ENCODE measurements at regions of chr5 and their contacts with region 1.

Region 1: GRCh38 chr5:95846554-95847260 is 24.2 kb upstream of the GLRX start:
- DNase-seq: peak in 1 of 2 donors; percentile 68
- ATAC-seq: peak; percentile 43 to 56
- H3K4me3 ChIP-seq: peak overlapping the region in 3 of 4 donors; percentile 8 to 59 (median 52)
- H3K27ac ChIP-seq: peak overlapping the region; percentile 84 to 92 (median 88)
- H3K4me1 ChIP-seq: peaks cover 19 to 30% of the 10 kb centered on the region in 2 donors
- H3K27me3 ChIP-seq: no peaks in the 10 kb centered on the region
- CTCF ChIP-seq: peak; percentile 92 to 97 (median 94)
- POLR2A ChIP-seq: no peak

Region 2: DNA sequence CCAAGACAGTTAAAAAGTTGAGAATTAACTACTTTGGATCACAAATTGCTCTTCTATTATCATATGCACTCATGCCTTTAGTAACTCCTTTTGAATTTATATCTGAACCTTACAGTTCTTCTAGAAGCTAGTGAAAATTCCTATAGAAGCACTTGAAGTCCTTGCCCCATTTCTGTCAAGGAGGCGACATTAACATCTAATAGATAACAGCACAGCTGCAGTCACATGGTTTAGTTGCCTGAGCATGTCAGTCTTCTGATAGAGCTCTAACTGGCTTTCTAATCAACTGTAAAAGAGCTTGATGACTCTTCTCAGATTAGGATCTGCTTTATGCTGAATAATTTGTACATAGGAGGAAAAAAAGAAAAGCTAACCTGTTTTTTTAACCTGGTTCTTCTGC is 191.1 kb before region 1 on chr5:
- in situ Hi-C with region 1: loop called in 2 of 4 experiments (anchors 5 kb)
- intact Hi-C with region 1: no loop called
- DNase-seq: no peak
- ATAC-seq: no peak
- H3K4me3 ChIP-seq: no peak overlapping the region
- H3K27ac ChIP-seq: no peak overlapping the region
- H3K4me1 ChIP-seq: peaks cover 0 to 1% of the 10 kb centered on the region in 2 donors
- H3K27me3 ChIP-seq: no peaks in the 10 kb centered on the region
- CTCF ChIP-seq: no peak
- POLR2A ChIP-seq: no peak

Region 3: GRCh38 chr5:95669540-95669939 is 177.2 kb before region 1 on chr5:
- in situ Hi-C with region 1: loop called in 3 of 4 experiments (anchors 5 kb)
- intact Hi-C with region 1: loop called (anchors 2 kb)
- DNase-seq: peak; percentile 86 to 89
- ATAC-seq: peak; percentile 99
- H3K4me3 ChIP-seq: no peak overlapping the region
- H3K27ac ChIP-seq: peak overlapping the region; percentile 68 to 86 (median 82)
- H3K4me1 ChIP-seq: peaks cover 14% of the 10 kb centered on the region in 2 donors
- H3K27me3 ChIP-seq: no peaks in the 10 kb centered on the region
- CTCF ChIP-seq: no peak
- POLR2A ChIP-seq: peak in 1 of 2 donors; percentile 50

Region 4: GRCh38 chr5:95773335-95774059 is 73.2 kb before region 1 on chr5:
- in situ Hi-C with region 1: loop called in 2 of 4 experiments (anchors 5 to 10 kb)
- intact Hi-C with region 1: no loop called
- DNase-seq: no peak
- ATAC-seq: no peak
- H3K4me3 ChIP-seq: no peak overlapping the region
- H3K27ac ChIP-seq: peak overlapping the region in 3 of 4 donors; percentile 2 to 33 (median 4)
- H3K4me1 ChIP-seq: peaks cover 9 to 41% of the 10 kb centered on the region in 2 donors
- H3K27me3 ChIP-seq: no peaks in the 10 kb centered on the region
- CTCF ChIP-seq: no peak
- POLR2A ChIP-seq: no peak

Region 5: DNA sequence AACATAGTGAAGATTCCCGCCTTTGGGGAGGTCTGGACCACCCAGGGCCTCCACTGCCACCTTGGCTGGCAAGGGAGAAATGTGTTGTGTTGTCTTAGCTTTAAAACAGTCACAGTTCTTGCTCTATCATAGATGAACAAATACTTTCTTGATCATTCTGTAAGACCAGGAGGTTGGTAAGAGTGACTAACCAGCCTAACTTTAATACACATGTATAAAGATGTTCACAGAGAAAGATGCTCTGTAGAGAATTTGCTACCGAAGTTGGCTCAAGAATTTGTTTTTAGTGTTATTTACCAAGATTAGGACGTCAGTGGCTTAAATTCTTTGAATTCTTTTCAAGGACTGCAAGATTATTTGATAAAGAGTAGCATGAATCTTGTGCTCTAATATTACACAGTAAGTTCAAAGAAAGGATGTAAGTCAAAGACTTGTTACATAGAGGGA is 52.6 kb before region 1 on chr5:
- in situ Hi-C with region 1: no loop called
- intact Hi-C with region 1: no loop called
- DNase-seq: no peak
- ATAC-seq: no peak
- H3K4me3 ChIP-seq: no peak overlapping the region
- H3K27ac ChIP-seq: no peak overlapping the region
- H3K4me1 ChIP-seq: no peaks in the 10 kb centered on the region
- H3K27me3 ChIP-seq: no peaks in the 10 kb centered on the region
- CTCF ChIP-seq: no peak
- POLR2A ChIP-seq: no peak

Region 6: DNA sequence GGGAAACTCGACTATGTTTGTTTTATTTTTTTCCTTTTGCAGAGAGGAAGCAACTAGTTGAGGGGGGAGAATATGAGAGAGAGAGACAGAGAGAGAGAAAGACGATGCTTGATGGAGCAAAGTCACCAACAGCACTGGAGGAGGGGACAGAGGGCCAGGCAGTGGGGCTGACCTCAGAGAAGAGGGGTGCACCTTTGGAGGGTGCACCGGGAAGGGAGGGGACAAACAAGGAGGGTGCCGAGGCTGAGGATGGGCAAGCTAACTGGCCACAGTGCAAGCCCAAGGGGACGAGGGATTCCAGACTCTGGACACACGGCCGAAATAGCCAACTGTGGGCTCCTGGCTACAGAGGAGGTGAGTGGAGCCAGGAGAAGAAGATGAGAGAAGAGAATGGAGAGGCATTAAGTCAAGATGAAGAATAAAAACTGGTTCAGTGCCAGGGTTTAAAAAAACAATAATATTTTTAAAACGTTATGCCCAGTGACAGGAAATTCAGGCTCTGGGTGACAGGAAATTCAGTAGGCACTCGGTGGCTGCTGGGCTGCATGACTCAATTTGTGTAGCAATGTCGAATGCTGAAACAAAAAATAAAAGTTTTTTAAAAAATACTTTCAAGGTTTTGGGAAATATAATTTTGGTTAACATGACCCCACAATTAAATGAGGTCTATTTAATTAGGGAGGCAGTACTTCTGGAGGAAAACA is 10.9 kb before region 1 on chr5:
- in situ Hi-C with region 1: no loop called
- intact Hi-C with region 1: loop called (anchors 1 kb)
- DNase-seq: peak in 1 of 2 donors; percentile 55
- ATAC-seq: no peak
- H3K4me3 ChIP-seq: peak overlapping the region; percentile 59 to 78 (median 66)
- H3K27ac ChIP-seq: peak overlapping the region; percentile 90 to 95 (median 92)
- H3K4me1 ChIP-seq: peaks cover 21 to 56% of the 10 kb centered on the region in 2 donors
- H3K27me3 ChIP-seq: no peaks in the 10 kb centered on the region
- CTCF ChIP-seq: no peak
- POLR2A ChIP-seq: no peak